ENCODE measurements at regions of chr7 and their contacts with region 1.

Region 1: GRCh38 chr7:27739909-27740448 is at the start of gene TAX1BP1:
- DNase-seq: peak; percentile 89
- ATAC-seq: peak; percentile 90
- H3K4me3 ChIP-seq: peak within 1 kb of the TSS; percentile 97 to 98 (median 98)
- H3K27ac ChIP-seq: peak within 1 kb of the TSS; percentile 97
- H3K4me1 ChIP-seq: peaks cover 55% of the 10 kb centered on the region
- H3K27me3 ChIP-seq: no peaks in the 10 kb centered on the region; a peak in 1 of 5 replicates
- CTCF ChIP-seq: 0 out of 2 replicates have a peak, but pooled peaks have one; percentile 1
- EP300 ChIP-seq: peak in 1 of 2 experiments; percentile 29; a peak in 1 of 4 replicates
- POLR2A ChIP-seq: peak; percentile 86 to 92; a peak in 3 of 4 replicates
- RAD21 ChIP-seq: peak; percentile 11; the same call in 1 of the 2 replicates
- total RNA-seq, gene TAX1BP1: 98.9 and 177 TPM in 2 replicates

Region 2: GRCh38 chr7:27677912-27678612 is 61.9 kb before region 1 on chr7:
- CTCF ChIA-PET with region 1: no interaction called
- POLR2A ChIA-PET with region 1: interaction called, 25 read pairs
- in situ Hi-C with region 1: no loop called
- intact Hi-C with region 1: no loop called
- DNase-seq: peak; percentile 83
- ATAC-seq: peak; percentile 62
- H3K4me3 ChIP-seq: no peak overlapping the region; a peak in 1 of 6 replicates
- H3K27ac ChIP-seq: peak overlapping the region; percentile 74
- H3K4me1 ChIP-seq: peaks cover 41% of the 10 kb centered on the region
- H3K27me3 ChIP-seq: no peaks in the 10 kb centered on the region
- CTCF ChIP-seq: no peak
- EP300 ChIP-seq: peak in 1 of 2 experiments; percentile 55; a peak in 1 of 4 replicates
- POLR2A ChIP-seq: no peak
- RAD21 ChIP-seq: no peak

Region 3: GRCh38 chr7:27689591-27690164 is 50.3 kb before region 1 on chr7:
- CTCF ChIA-PET with region 1: no interaction called
- POLR2A ChIA-PET with region 1: interaction called, 9 read pairs
- in situ Hi-C with region 1: no loop called
- intact Hi-C with region 1: loop called (anchors 1 kb)
- DNase-seq: peak; percentile 35
- ATAC-seq: peak; percentile 92
- H3K4me3 ChIP-seq: no peak overlapping the region
- H3K27ac ChIP-seq: no peak overlapping the region
- H3K4me1 ChIP-seq: peaks cover 40% of the 10 kb centered on the region
- H3K27me3 ChIP-seq: no peaks in the 10 kb centered on the region
- CTCF ChIP-seq: peak; percentile 87
- EP300 ChIP-seq: no peak
- POLR2A ChIP-seq: no peak
- RAD21 ChIP-seq: peak; percentile 76

Region 4: GRCh38 chr7:27714831-27715444 is 25.0 kb before region 1 on chr7:
- CTCF ChIA-PET with region 1: no interaction called
- POLR2A ChIA-PET with region 1: interaction called, 20 read pairs
- in situ Hi-C with region 1: no loop called
- intact Hi-C with region 1: no loop called
- DNase-seq: peak; percentile 86
- ATAC-seq: peak; percentile 85
- H3K4me3 ChIP-seq: peak overlapping the region in 1 of 3 experiments; percentile 16; a peak in 1 of 6 replicates
- H3K27ac ChIP-seq: peak overlapping the region; percentile 11
- H3K4me1 ChIP-seq: peaks cover 58% of the 10 kb centered on the region
- H3K27me3 ChIP-seq: no peaks in the 10 kb centered on the region
- CTCF ChIP-seq: no peak
- EP300 ChIP-seq: peak in 1 of 2 experiments; percentile 30; a peak in 1 of 4 replicates
- POLR2A ChIP-seq: no peak
- RAD21 ChIP-seq: no peak

Region 5: GRCh38 chr7:27901028-27901760 is 161.2 kb after region 1 on chr7:
- CTCF ChIA-PET with region 1: no interaction called
- POLR2A ChIA-PET with region 1: no interaction called
- in situ Hi-C with region 1: no loop called
- intact Hi-C with region 1: no loop called
- DNase-seq: no peak
- ATAC-seq: no peak
- H3K4me3 ChIP-seq: no peak overlapping the region
- H3K27ac ChIP-seq: no peak overlapping the region
- H3K4me1 ChIP-seq: peaks cover 13% of the 10 kb centered on the region
- H3K27me3 ChIP-seq: peaks cover 2 to 7% of the 10 kb centered on the region in 2 experiments; a peak in 1 of 5 replicates
- CTCF ChIP-seq: no peak
- EP300 ChIP-seq: no peak
- POLR2A ChIP-seq: no peak
- RAD21 ChIP-seq: no peak

Measured in HepG2 (cell line).